Dendritic cell treated with granulocyte-macrophage colony-stimulating factor and Interleukin-4, amounts not matched to agents 40 ng/mL and 50 ng/mL, for 4 days (primary cell): ENCODE measurements at regions of chr4 and their contacts with region 1.

Region 1: DNA sequence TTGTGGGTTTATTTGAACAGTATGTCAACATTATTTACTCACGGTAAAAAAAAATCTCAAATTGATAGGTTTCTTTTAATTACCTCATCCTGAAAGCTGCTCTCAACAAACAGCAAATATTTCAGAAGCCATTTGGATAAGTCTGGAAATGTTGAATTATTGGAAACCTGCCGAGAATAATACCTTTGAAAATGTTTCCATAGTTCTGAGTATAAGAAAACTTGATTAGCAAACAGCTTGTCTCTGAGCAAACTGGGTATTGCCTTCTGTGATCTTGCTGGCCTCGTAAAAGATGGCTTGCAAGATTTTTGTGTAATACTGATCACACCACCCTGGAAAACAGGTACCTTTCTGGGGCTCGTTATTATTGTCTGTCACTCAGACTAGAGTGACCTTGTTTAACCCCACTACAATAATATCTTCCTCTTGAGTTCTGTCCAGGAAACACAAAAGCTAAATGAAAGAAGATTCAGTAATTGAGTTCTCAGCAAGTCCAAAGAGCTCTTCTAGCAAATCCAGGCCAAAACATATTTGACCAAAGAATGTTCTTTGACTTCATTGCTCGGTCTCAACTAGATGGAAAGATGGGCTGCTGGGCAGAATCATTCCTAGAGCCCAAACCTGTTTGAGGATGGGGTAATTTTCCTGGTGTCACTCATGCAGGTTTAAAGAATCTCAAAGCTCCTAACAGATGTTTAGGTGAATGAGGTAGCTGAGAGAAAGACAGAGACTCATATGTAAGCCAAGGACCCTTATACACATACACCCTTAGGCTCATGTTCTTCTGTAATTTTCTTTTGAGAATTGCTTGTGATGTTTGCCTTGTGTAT is 255.6 kb upstream of the JADE1 start:
- H3K4me3 Mint-ChIP-seq: peak overlapping the region; percentile 86
- H3K27ac Mint-ChIP-seq: peak overlapping the region; percentile 89
- H3K4me1 Mint-ChIP-seq: peaks cover 21% of the 10 kb centered on the region
- H3K27me3 Mint-ChIP-seq: peaks cover 12% of the 10 kb centered on the region

Region 2: GRCh38 chr4:128517739-128518510 is 36.0 kb before region 1 on chr4:
- intact Hi-C with region 1: loop called (anchors 5 kb)
- H3K4me3 Mint-ChIP-seq: no peak overlapping the region
- H3K27ac Mint-ChIP-seq: peak overlapping the region; percentile 20
- H3K4me1 Mint-ChIP-seq: peaks cover 27% of the 10 kb centered on the region
- H3K27me3 Mint-ChIP-seq: no peaks in the 10 kb centered on the region

Region 3: DNA sequence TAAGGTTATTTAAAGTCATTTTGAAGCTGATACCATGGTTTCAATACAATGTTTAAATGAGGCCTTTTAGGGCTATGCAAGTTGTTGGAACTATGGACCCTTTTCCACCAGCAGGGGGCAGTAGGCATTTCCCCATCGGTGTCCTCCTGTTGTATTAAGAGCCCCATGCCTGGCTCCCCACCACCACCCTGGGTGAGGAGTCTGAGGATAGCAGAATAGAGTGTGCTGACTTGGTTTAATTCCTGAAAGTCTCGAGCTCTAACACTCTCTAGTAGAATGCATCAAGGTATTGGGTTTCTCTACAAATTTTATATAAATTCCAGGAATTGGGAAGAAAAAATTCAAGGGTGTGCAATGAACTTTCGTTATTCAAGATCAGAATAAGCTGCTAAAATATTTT is 20.8 kb after region 1 on chr4:
- intact Hi-C with region 1: loop called (anchors 2 kb)
- H3K4me3 Mint-ChIP-seq: no peak overlapping the region
- H3K27ac Mint-ChIP-seq: no peak overlapping the region
- H3K4me1 Mint-ChIP-seq: peaks cover 33% of the 10 kb centered on the region
- H3K27me3 Mint-ChIP-seq: no peaks in the 10 kb centered on the region